ENCODE measurements at regions of chr3 and their contacts with region 1.

Region 1: GRCh38 chr3:49120438-49121131 is at the start of gene USP19:
- DNase-seq: peak; percentile 84 to 96
- H3K4me3 ChIP-seq: peak within 1 kb of the TSS; percentile 83 to 92 (median 86)
- H3K27ac ChIP-seq: peak within 1 kb of the TSS; percentile 78
- H3K4me1 ChIP-seq: peaks cover 0 to 11% (median 6%) of the 10 kb centered on the region in 4 experiments; a peak in 5 of 7 replicates
- H3K27me3 ChIP-seq: no peaks in the 10 kb centered on the region
- CTCF ChIP-seq: no peak
- EP300 ChIP-seq: peak in 1 of 2 experiments; percentile 60; a peak in 1 of 3 replicates
- POLR2A ChIP-seq: peak in 1 of 2 experiments; percentile 85; a peak in 2 of 3 replicates
- RAD21 ChIP-seq: 0 out of 4 replicates have a peak, but pooled peaks of 1 of the 2 experiments have one; percentile 2
- total RNA-seq, gene USP19: 64.9 and 65.8 TPM in 2 replicates

Region 2: GRCh38 chr3:49133226-49133951 is 12.8 kb after region 1 on chr3:
- CTCF ChIA-PET with region 1: interaction called, 20 read pairs
- POLR2A ChIA-PET with region 1: interaction called, 19 read pairs
- DNase-seq: peak in 1 of 2 experiments; percentile 85
- H3K4me3 ChIP-seq: peak overlapping the region; percentile 62 to 92 (median 81)
- H3K27ac ChIP-seq: peak overlapping the region; percentile 43; the same call in 1 of the 2 replicates
- H3K4me1 ChIP-seq: peaks cover 0 to 8% (median 7%) of the 10 kb centered on the region in 4 experiments; a peak in 6 of 7 replicates
- H3K27me3 ChIP-seq: no peaks in the 10 kb centered on the region; a peak in 2 of 7 replicates
- CTCF ChIP-seq: no peak
- EP300 ChIP-seq: peak in 1 of 2 experiments; percentile 8; a peak in 1 of 3 replicates
- POLR2A ChIP-seq: no peak; a peak in 1 of 3 replicates
- RAD21 ChIP-seq: no peak